Mammary epithelial cell (primary cell): ENCODE measurements at regions of chr10 and their contacts with region 1.

Region 1: GRCh38 chr10:44068716-44069482 is 316.0 kb downstream of the CXCL12 start:
- DNase-seq: no peak
- H3K4me3 ChIP-seq: no peak overlapping the region
- H3K27ac ChIP-seq: no peak overlapping the region
- H3K4me1 ChIP-seq: no peaks in the 10 kb centered on the region
- H3K27me3 ChIP-seq: no peaks in the 10 kb centered on the region
- CTCF ChIP-seq: no peak

Region 2: GRCh38 chr10:44016589-44017482 is 52.1 kb before region 1 on chr10:
- CTCF ChIA-PET with region 1: no interaction called
- dilution Hi-C with region 1: loop called (anchors 5 kb)
- in situ Hi-C with region 1: no loop called
- intact Hi-C with region 1: no loop called
- DNase-seq: no peak
- H3K4me3 ChIP-seq: no peak overlapping the region
- H3K27ac ChIP-seq: no peak overlapping the region
- H3K4me1 ChIP-seq: no peaks in the 10 kb centered on the region
- H3K27me3 ChIP-seq: no peaks in the 10 kb centered on the region
- CTCF ChIP-seq: no peak